Activated naive CD4-positive, alpha-beta T cell treated with anti-CD3 and anti-CD28 coated beads, Interleukin-2, amount 10 ng/mL, durations not matched to agents 7 days and 5 days (primary cell): ENCODE measurements at regions of chr2 and their contacts with region 1.

Region 1: GRCh38 chr2:60695793-60696192 is 60.3 kb upstream of the PAPOLG start:
- DNase-seq: no peak
- H3K4me3 Mint-ChIP-seq: no peak overlapping the region
- H3K27ac Mint-ChIP-seq: no peak overlapping the region
- H3K4me1 Mint-ChIP-seq: no peaks in the 10 kb centered on the region
- H3K27me3 Mint-ChIP-seq: peaks cover 19% of the 10 kb centered on the region

Region 2: DNA sequence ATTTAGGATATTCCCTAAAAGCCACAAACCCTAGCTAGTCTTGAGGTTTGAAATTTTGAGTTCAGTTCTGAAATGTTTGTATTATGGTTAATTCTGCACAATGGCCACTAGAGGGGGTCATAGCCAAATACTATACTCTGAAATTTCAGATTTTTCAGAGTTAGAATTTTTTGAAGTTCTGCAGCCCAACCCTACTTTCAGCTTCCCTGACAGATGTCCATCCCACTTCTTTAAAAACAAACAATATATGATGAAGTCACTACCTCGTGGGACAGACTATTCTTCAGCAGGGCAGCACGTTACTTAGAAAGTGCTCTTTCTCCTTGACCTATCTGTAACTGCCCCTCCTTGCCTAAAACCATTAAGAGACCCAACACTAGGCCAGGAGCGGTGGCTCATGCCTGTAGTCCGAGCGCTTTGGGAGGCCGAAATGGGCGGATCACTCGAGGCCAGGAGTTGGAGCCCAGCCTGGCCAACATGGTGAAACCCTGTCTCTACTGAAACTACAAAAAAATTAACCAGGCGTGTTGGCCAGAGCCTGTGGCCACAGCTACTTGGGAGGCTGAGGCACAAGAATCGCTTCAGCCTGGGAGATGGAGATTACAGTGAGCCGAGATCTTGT is 12.1 kb after region 1 on chr2:
- CTCF ChIA-PET with region 1: interaction called, 14 read pairs
- DNase-seq: no peak
- H3K4me3 Mint-ChIP-seq: no peak overlapping the region
- H3K27ac Mint-ChIP-seq: no peak overlapping the region
- H3K4me1 Mint-ChIP-seq: no peaks in the 10 kb centered on the region
- H3K27me3 Mint-ChIP-seq: peaks cover 13% of the 10 kb centered on the region

Region 3: GRCh38 chr2:61117534-61117933 is 421.7 kb after region 1 on chr2:
- CTCF ChIA-PET with region 1: no interaction called
- DNase-seq: no peak
- H3K4me3 Mint-ChIP-seq: no peak overlapping the region
- H3K27ac Mint-ChIP-seq: no peak overlapping the region
- H3K4me1 Mint-ChIP-seq: no peaks in the 10 kb centered on the region
- H3K27me3 Mint-ChIP-seq: no peaks in the 10 kb centered on the region